ENCODE measurements at regions of chr1 and their contacts with region 1.

Region 1: DNA sequence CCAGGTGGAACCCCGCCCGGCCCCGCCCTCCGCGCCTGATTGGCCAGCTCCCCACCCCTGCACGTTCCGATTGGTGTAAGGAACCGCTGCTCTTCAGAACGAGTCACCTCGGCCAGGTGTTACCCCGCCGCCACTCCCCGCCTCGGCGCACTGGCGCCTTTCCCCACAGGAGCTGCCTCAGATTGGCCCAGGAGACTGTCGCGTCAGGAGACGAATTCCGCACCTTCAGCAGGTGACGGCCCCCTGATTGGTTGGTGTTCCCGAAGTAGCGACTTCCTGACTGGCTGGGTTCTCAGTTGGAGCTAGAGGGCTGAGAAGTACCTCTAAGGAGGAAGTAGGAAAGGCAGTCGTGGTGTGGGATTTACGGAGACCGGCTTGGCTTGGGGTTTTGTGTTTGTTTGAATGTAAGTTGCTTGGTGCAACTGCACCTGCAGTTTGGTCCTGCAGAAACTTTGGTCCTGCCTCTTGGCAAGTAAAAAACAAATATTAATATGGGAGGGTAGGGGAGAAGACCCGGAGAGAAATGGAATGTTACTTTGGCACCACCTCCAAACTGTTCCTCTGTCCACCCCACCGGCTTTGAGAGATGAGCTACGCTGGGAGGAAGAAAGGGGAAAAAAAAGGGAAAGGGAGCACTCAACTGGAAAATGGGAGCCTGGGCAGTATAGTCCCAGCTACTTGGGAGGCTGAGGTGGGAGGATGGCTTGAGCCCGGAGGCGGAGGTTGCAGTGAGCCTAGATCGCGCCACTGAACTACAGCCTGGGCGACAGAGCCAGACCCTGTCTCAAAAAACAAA is 411 bp upstream of the F11R start:
- DNase-seq: peak; percentile 99
- H3K4me3 Mint-ChIP-seq: peak overlapping the region; percentile 91
- H3K27ac Mint-ChIP-seq: peak overlapping the region; percentile 94
- H3K4me1 Mint-ChIP-seq: peaks cover 58% of the 10 kb centered on the region
- H3K27me3 Mint-ChIP-seq: no peaks in the 10 kb centered on the region
- CTCF ChIP-seq: no peak

Region 2: DNA sequence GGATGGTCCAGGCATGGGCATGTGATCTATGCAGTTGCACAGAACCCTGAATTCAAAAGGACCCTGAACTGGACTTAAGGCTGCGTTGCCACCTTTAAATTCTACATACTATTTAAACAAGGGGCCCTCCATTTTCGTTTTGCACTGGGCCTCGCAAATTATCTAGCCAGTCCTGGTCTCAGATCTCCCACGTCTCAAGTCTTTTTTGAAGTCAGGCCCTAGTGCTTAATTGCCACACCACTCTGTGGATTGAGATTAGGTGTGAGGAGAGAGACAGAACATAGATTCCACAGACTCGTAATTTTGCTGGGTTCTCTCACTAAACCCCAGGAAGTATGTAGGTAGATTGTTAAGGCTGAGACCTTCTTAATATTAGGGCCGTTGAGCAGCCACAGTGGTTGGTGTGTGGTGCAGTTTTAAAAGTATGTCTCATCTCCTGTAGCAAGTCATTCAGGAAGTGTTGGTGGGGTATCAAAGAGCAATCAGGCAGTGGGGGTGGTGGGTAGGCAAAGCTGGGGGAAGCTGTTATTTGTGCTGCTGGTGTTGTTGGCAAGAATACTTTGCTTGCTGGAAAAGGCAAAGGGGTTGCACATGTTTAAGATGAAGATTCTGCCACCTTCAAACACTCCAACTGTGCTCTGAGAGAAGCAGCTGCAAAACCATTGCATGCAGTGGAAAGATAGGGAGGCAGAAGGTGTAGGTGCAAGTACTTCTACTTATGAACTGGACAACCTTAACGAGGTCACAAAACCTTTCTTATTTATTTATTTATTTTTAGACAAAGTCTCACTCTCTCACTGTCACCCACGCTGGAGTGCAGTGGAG is 453.3 kb before region 1 on chr1:
- CTCF ChIA-PET with region 1: no interaction called
- intact Hi-C with region 1: no loop called
- DNase-seq: no peak
- H3K4me3 Mint-ChIP-seq: no peak overlapping the region
- H3K27ac Mint-ChIP-seq: no peak overlapping the region
- H3K4me1 Mint-ChIP-seq: no peaks in the 10 kb centered on the region
- H3K27me3 Mint-ChIP-seq: peaks cover 53% of the 10 kb centered on the region
- CTCF ChIP-seq: no peak

Region 3: DNA sequence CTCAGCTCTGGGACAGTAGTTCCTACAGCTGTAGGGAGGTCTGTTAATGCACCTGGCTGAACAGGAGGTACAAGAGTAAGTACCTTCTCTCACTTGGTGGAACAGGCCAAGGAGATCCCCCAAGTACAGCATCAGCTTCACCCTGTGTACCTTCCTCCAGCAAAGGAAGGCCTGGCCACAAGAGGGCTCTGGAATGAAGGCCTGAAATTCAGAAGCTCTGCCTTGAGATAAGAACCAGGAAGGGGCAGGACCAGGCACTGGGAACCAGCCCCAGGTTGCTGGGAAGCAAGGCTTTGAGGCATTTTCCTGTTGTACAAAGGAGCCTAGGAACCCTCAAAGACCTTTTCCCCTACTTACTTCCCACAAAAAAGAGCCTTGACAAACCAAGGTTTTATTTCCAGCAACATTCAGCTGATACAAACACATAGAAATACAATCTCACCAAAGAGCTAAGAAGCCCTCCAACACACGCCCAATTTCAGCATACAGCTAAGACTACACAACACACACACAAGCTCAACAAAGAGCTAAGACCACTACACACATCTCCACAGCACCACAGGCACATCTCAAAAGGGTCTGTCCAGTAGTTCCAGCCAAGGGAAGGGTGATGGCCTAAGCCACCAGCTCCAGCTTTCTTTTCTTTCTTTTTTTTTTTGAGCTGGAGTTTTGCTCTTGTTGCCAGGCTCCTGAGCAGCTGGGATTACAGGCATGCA is 23.9 kb before region 1 on chr1:
- CTCF ChIA-PET with region 1: interaction called, 35 read pairs
- intact Hi-C with region 1: no loop called
- DNase-seq: peak; percentile 80
- H3K4me3 Mint-ChIP-seq: peak overlapping the region; percentile 2
- H3K27ac Mint-ChIP-seq: peak overlapping the region; percentile 71
- H3K4me1 Mint-ChIP-seq: peaks cover 56% of the 10 kb centered on the region
- H3K27me3 Mint-ChIP-seq: no peaks in the 10 kb centered on the region
- CTCF ChIP-seq: peak; percentile 68

Region 4: GRCh38 chr1:161038523-161039153 is 17.3 kb after region 1 on chr1 and contains the start of gene TSTD1:
- CTCF ChIA-PET with region 1: interaction called, 17 read pairs
- intact Hi-C with region 1: no loop called
- DNase-seq: peak; percentile 85
- H3K4me3 Mint-ChIP-seq: peak within 1 kb of the TSS; percentile 95
- H3K27ac Mint-ChIP-seq: peak within 1 kb of the TSS; percentile 45
- H3K4me1 Mint-ChIP-seq: peaks cover 9% of the 10 kb centered on the region
- H3K27me3 Mint-ChIP-seq: no peaks in the 10 kb centered on the region
- CTCF ChIP-seq: no peak
- total RNA-seq, gene TSTD1: 67.6 and 74.1 TPM in 2 replicates

Region 5: DNA sequence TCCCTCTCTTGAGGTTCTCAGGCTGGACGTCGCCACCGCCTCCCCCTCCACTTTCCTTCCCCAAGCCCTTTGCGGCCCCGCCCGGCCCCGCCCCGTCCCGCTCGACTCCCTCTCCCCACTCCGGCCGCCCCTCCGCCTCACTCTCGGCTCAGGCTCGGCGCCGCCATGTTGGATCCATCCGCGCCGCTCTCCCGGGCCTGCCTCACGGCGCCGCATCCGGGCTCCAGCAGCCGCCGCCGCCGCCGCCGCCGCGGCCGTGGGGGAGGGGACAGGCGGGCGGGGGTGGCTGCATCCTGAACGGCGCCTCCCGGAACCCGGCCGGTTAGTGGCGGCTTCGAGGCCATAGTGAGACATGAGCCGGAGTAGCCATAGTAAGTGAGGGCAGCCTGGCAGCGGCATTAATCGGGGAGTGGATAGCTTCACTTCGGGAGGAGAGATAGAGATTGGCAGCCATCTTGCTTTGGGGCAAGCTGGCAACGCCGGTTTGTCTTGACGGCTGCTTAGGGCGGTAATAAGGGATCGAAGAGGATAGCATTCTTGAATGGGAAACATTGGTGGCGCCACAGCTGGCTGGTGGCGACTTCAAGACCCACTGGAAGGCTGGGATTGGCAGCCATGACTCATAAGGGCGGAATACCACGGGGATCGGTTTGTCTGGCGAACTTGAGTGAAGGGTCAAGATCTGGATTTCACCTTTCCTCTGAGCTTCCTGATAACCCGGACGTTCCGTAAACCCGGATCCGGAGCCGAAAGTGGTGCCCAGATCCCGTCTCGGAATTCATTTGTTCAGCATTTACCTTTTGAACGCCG is 111.3 kb after region 1 on chr1 and contains the start of gene DEDD:
- CTCF ChIA-PET with region 1: interaction called, 10 read pairs
- intact Hi-C with region 1: no loop called
- DNase-seq: peak; percentile 94
- H3K4me3 Mint-ChIP-seq: no peak within 1 kb of the TSS
- H3K27ac Mint-ChIP-seq: no peak within 1 kb of the TSS
- H3K4me1 Mint-ChIP-seq: peaks cover 25% of the 10 kb centered on the region
- H3K27me3 Mint-ChIP-seq: no peaks in the 10 kb centered on the region
- CTCF ChIP-seq: no peak
- total RNA-seq, gene DEDD: 40.4 and 45.7 TPM in 2 replicates